Lower leg skin (tissue), 4 donors: ENCODE measurements at regions of chr6 and their contacts with region 1.

Region 1: GRCh38 chr6:29847871-29848630 is 20.4 kb downstream of the HLA-G start:
- DNase-seq: peak; percentile 69 to 96
- H3K4me3 ChIP-seq: no peak overlapping the region
- CTCF ChIP-seq: peak in 1 of 3 donors; percentile 86
- POLR2A ChIP-seq: no peak

Region 2: GRCh38 chr6:30013291-30013922 is 165.4 kb after region 1 on chr6:
- intact Hi-C with region 1: loop called (anchors 5 kb)
- DNase-seq: no peak
- H3K4me3 ChIP-seq: no peak overlapping the region
- CTCF ChIP-seq: no peak
- POLR2A ChIP-seq: no peak